ENCODE measurements at regions of chr16 and their contacts with region 1.

Region 1: GRCh38 chr16:69123910-69124309 is 8.5 kb downstream of the CHTF8 start:
- DNase-seq: no peak
- H3K4me3 ChIP-seq: no peak overlapping the region
- CTCF ChIP-seq: peak; percentile 52

Region 2: DNA sequence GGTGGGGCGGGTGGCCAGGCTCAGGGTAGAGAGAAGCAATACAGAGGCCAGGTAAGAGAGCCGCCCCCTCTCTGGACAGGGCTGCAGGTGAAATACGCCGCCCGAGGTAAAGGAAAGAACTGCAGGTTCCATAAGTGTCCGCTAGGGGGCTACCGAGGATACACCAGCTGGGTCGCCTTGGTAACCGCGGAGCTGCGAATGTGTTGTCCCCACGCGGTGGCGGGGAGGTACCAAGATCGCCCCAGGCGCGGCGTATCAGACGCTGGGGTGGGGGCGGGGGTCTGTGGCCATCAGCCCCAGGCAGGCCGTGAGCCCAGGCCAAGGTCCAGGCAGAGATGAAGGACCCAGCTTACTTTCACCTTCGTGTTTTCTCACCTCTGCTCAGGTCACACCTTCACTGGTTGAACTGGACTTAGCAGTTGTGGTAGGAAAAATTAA is 603.2 kb before region 1 on chr16:
- CTCF ChIA-PET with region 1: interaction called, 10 read pairs
- POLR2A ChIA-PET with region 1: no interaction called
- DNase-seq: no peak
- H3K4me3 ChIP-seq: peak overlapping the region; percentile 50
- CTCF ChIP-seq: peak; percentile 98

Region 3: GRCh38 chr16:68528686-68529379 is 595.1 kb before region 1 on chr16:
- CTCF ChIA-PET with region 1: interaction called, 47 read pairs
- POLR2A ChIA-PET with region 1: no interaction called
- DNase-seq: no peak
- H3K4me3 ChIP-seq: peak overlapping the region; percentile 32
- CTCF ChIP-seq: peak; percentile 97

Region 4: DNA sequence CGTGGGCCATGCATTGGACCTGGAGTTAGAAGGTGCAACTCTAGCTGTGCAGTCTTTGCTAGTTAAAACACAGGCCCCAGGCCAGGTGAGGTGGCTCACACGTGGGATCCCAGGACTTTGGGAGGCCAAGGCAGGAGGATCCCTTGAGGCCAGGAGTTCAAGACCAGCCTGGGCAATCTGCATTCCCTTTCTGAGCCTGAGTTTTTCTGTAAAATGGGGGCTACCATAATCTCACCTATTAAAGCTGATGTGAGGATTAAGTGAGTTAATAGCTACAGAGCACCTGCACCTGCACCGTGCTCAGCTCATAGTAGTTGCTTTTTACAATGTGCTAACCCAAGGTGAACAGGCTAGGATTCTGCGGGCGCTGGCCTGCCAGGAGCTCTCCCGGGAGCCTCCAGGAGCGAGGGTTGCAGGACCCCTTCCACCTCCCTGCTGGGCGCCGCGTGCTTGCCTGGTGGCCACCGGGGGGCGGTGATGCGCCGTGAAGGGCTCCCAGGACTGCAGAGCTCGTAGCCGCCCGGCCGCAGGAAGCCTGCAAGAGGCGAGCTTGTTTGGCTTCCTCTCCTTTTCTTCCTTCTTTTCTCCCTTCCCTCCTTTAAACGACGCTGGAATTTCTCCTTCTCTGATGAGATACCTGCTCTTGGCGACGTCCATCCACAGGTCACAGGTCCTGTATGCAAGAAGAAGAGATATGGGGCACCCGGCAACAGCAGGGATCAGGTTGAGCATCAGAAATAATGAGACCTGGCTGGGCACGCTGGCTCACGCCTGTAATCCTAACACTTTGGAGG is 533.5 kb before region 1 on chr16:
- CTCF ChIA-PET with region 1: interaction called, 41 read pairs
- POLR2A ChIA-PET with region 1: no interaction called
- DNase-seq: no peak
- H3K4me3 ChIP-seq: no peak overlapping the region; the same call in 1 of the 2 replicates
- CTCF ChIP-seq: peak; percentile 93

Region 5: DNA sequence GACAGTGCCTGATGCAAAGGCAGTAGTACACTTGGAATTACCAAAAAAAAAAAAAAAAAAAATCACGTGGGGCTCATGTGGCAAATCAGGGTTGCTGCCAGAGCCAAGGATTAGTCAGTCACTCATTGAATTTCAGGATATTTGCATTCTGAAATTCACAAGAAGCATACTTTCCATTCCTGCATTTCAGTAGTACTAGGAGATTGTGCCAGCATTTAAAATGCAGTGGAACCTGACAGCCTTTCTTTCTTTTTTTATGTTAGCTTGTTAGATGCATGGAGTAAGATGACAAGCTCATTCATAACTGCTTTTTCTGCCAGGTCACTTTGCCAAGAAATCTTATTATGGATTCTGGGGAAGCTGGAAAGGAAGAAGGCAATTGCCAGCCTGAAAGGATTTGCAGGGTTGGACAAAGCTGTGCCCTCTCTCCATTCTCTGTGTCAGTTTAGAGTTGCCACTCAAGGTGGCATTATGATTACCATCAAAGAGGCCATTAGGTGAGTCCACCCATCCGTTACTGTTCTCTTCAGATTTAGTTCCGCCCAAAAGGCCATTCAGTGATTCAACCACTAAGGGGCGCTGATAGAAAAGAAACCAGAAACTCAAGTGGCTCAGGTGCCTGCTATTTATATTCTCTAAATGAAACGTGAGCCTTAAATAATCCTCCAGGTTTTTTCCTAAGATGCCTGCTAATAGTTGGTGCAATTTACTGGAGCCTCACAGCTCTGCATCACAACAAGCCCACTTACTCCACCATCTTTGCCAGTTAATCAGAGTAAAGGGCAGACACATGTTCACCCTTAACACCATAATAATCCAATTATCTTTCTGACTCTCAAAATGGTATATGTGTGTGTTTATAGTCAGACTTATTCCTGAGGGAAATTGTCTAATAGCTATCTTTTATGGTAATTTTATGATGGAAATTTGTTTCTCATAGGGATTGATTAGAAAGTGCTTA is 221.6 kb before region 1 on chr16:
- CTCF ChIA-PET with region 1: interaction called, 193 read pairs
- POLR2A ChIA-PET with region 1: no interaction called
- DNase-seq: peak; percentile 46
- H3K4me3 ChIP-seq: no peak overlapping the region
- CTCF ChIP-seq: peak; percentile 53

Region 6: DNA sequence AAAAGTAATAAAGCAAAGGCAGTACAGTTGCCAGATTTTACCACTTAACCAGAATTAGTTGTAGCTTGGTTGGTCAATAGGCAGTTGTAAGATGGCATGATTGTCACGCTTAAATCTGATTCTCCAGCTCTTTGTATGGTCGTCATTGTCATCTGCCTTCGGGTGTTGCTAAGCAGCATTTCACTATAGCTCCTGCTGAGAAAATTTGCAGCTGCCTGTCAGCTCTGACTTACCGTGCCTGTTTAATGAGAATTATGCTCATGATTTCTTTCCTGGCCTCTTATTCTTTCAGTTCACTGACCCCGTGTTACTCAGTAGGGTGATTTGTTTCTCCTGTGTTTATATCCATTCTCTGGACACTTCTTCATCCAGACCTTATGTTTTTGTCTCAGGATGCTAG is 213.9 kb before region 1 on chr16:
- CTCF ChIA-PET with region 1: interaction called, 32 read pairs
- POLR2A ChIA-PET with region 1: no interaction called
- DNase-seq: no peak
- H3K4me3 ChIP-seq: no peak overlapping the region
- CTCF ChIP-seq: no peak

Region 7: GRCh38 chr16:69019811-69020210 is 104.1 kb before region 1 on chr16:
- CTCF ChIA-PET with region 1: no interaction called
- POLR2A ChIA-PET with region 1: no interaction called
- DNase-seq: no peak
- H3K4me3 ChIP-seq: no peak overlapping the region
- CTCF ChIP-seq: no peak

Region 8: GRCh38 chr16:69112285-69113129 is 11.4 kb before region 1 on chr16:
- CTCF ChIA-PET with region 1: interaction called, 142 read pairs
- POLR2A ChIA-PET with region 1: interaction called, 4 read pairs
- DNase-seq: no peak
- H3K4me3 ChIP-seq: no peak overlapping the region
- CTCF ChIP-seq: peak; percentile 89

Measured in AG04449 (cell line).